Gastrocnemius medialis (tissue), 4 donors: ENCODE measurements at regions of chr19 and their contacts with region 1.

Region 1: GRCh38 chr19:10112895-10113591 is 1.6 kb downstream of the P2RY11 start:
- DNase-seq: no peak
- ATAC-seq: no peak
- H3K4me3 ChIP-seq: no peak overlapping the region
- H3K27ac ChIP-seq: peak overlapping the region in 1 of 4 donors; percentile 27
- H3K4me1 ChIP-seq: peaks cover 4 to 17% of the 10 kb centered on the region in 2 donors
- H3K27me3 ChIP-seq: no peaks in the 10 kb centered on the region
- CTCF ChIP-seq: peak in 4 of 5 experiments; percentile 27 to 54 (median 38)
- POLR2A ChIP-seq: no peak

Region 2: GRCh38 chr19:10155839-10156238 is 42.8 kb after region 1 on chr19:
- in situ Hi-C with region 1: no loop called
- intact Hi-C with region 1: no loop called
- DNase-seq: no peak
- ATAC-seq: no peak
- H3K4me3 ChIP-seq: no peak overlapping the region
- H3K27ac ChIP-seq: no peak overlapping the region
- H3K4me1 ChIP-seq: no peaks in the 10 kb centered on the region
- H3K27me3 ChIP-seq: no peaks in the 10 kb centered on the region
- CTCF ChIP-seq: no peak
- POLR2A ChIP-seq: no peak

Region 3: DNA sequence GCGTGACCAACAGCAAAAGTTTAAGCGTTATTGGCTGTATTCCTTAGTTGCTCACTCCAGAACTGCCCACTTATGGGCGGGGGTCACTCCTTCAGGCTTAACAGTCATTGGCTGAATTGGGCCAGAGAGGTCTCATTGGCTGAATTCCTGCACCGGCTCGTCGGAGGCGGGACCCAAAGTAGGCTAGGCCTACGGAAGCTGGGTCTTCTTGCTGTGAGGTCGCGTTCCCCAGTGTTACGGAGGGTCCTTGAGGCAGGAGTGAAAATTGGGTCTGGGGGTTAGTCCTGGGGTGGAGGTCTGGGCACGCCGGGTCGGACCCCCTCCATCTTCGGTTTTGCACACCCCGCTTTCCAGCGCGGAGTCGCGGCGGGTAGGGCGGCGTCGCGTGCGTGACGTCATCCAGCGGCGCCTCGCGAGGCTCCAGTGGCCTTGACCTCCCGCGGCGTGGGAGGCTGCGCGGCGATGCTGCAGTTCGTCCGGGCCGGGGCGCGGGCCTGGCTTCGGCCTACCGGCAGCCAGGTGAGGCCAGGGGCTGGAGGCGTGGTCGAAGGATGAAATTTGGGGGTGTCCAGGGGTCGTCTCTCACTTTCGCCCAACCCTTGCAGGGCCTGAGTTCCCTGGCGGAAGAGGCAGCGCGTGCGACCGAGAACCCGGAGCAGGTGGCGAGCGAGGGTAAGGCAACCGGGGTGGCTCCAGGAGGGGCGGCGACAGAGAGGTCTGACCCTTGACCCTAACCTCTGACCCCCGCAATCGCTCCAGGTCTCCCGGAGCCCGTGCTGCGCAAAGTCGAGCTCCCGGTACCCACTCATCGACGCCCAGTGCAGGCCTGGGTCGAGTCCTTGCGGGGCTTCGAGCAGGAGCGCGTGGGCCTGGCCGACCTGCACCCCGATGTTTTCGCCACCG is 139.0 kb after region 1 on chr19 and contains the start of gene MRPL4:
- in situ Hi-C with region 1: no loop called
- intact Hi-C with region 1: loop called (anchors 5 kb)
- DNase-seq: peak; percentile 95 to 97
- ATAC-seq: peak; percentile 99 to 100
- H3K4me3 ChIP-seq: peak within 1 kb of the TSS; percentile 77 to 97 (median 89)
- H3K27ac ChIP-seq: peak within 1 kb of the TSS; percentile 82 to 87 (median 86)
- H3K4me1 ChIP-seq: peaks cover 7 to 15% of the 10 kb centered on the region in 2 donors
- H3K27me3 ChIP-seq: no peaks in the 10 kb centered on the region
- CTCF ChIP-seq: peak in 2 of 5 experiments; percentile 44 to 57
- POLR2A ChIP-seq: peak; percentile 63 to 73
- total RNA-seq, gene MRPL4: 68.3 to 112 (median 84.4) TPM